CD8-positive, alpha-beta T cell (primary cell): ENCODE measurements at regions of chr5 and their contacts with region 1.

Region 1: DNA sequence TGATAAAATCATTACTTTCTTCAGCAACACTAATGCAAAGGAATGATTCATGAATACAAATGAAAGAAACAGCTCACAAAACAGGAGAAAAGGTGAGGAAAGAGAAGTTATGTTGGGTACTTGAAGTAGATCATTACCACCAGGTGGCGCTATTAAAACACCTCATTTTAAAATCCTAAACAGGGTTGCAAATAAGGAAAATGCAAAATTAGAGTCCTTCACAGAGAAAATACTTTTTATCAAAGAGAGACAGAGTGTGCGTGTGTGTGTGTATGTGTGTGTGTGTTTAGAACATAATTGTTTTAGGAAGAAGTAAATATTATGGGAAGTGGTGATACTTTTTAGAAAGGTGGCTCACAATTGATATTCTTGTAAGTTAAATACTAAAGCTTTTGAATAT is 49.5 kb upstream of the CD180 start:
- DNase-seq: peak in 3 of 9 experiments; percentile 39 to 80 (median 74)
- ATAC-seq: no peak
- H3K4me3 ChIP-seq: no peak overlapping the region
- H3K4me3 Mint-ChIP-seq: no peak overlapping the region
- H3K27ac ChIP-seq: no peak overlapping the region
- H3K27ac Mint-ChIP-seq: no peak overlapping the region
- H3K4me1 ChIP-seq: peaks cover 9% of the 10 kb centered on the region
- H3K4me1 Mint-ChIP-seq: peaks cover 11% of the 10 kb centered on the region
- H3K27me3 ChIP-seq: no peaks in the 10 kb centered on the region
- H3K27me3 Mint-ChIP-seq: no peaks in the 10 kb centered on the region
- CTCF ChIP-seq: peak; percentile 95

Region 2: GRCh38 chr5:67209142-67209771 is 36.9 kb before region 1 on chr5:
- CTCF ChIA-PET with region 1: interaction called, 13 read pairs
- POLR2A ChIA-PET with region 1: no interaction called
- intact Hi-C with region 1: no loop called
- DNase-seq: peak; percentile 12 to 84 (median 61)
- ATAC-seq: peak; percentile 51
- H3K4me3 ChIP-seq: no peak overlapping the region
- H3K4me3 Mint-ChIP-seq: peak overlapping the region; percentile 13
- H3K27ac ChIP-seq: no peak overlapping the region
- H3K27ac Mint-ChIP-seq: peak overlapping the region; percentile 86
- H3K4me1 ChIP-seq: peaks cover 49% of the 10 kb centered on the region
- H3K4me1 Mint-ChIP-seq: peaks cover 58% of the 10 kb centered on the region
- H3K27me3 ChIP-seq: no peaks in the 10 kb centered on the region
- H3K27me3 Mint-ChIP-seq: no peaks in the 10 kb centered on the region
- CTCF ChIP-seq: peak; percentile 81

Region 3: GRCh38 chr5:67221487-67222242 is 24.4 kb before region 1 on chr5:
- CTCF ChIA-PET with region 1: interaction called, 26 read pairs
- POLR2A ChIA-PET with region 1: no interaction called
- intact Hi-C with region 1: no loop called
- DNase-seq: peak in 7 of 9 experiments; percentile 26 to 74 (median 52)
- ATAC-seq: peak; percentile 73
- H3K4me3 ChIP-seq: peak overlapping the region in 1 of 2 experiments; percentile 10
- H3K4me3 Mint-ChIP-seq: peak overlapping the region; percentile 71
- H3K27ac ChIP-seq: peak overlapping the region in 1 of 2 experiments; percentile 39
- H3K27ac Mint-ChIP-seq: peak overlapping the region; percentile 94
- H3K4me1 ChIP-seq: peaks cover 42% of the 10 kb centered on the region
- H3K4me1 Mint-ChIP-seq: peaks cover 61% of the 10 kb centered on the region
- H3K27me3 ChIP-seq: no peaks in the 10 kb centered on the region
- H3K27me3 Mint-ChIP-seq: no peaks in the 10 kb centered on the region
- CTCF ChIP-seq: no peak

Region 4: GRCh38 chr5:68272289-68272688 is 1026.2 kb after region 1 on chr5:
- CTCF ChIA-PET with region 1: interaction called, 38 read pairs
- POLR2A ChIA-PET with region 1: no interaction called
- intact Hi-C with region 1: loop called (anchors 1 kb)
- DNase-seq: peak in 2 of 9 experiments; percentile 38 to 58
- ATAC-seq: no peak
- H3K4me3 ChIP-seq: no peak overlapping the region
- H3K4me3 Mint-ChIP-seq: no peak overlapping the region
- H3K27ac ChIP-seq: no peak overlapping the region
- H3K27ac Mint-ChIP-seq: peak overlapping the region; percentile 52
- H3K4me1 ChIP-seq: peaks cover 64% of the 10 kb centered on the region
- H3K4me1 Mint-ChIP-seq: peaks cover 76% of the 10 kb centered on the region
- H3K27me3 ChIP-seq: no peaks in the 10 kb centered on the region
- H3K27me3 Mint-ChIP-seq: no peaks in the 10 kb centered on the region
- CTCF ChIP-seq: peak; percentile 66

Region 5: GRCh38 chr5:68460147-68460798 is 1214.2 kb after region 1 on chr5:
- CTCF ChIA-PET with region 1: interaction called, 6 read pairs
- POLR2A ChIA-PET with region 1: interaction called, 4 read pairs
- intact Hi-C with region 1: loop called (anchors 1 to 2 kb)
- DNase-seq: peak in 8 of 9 experiments; percentile 13 to 81 (median 42)
- ATAC-seq: peak; percentile 55
- H3K4me3 ChIP-seq: no peak overlapping the region
- H3K4me3 Mint-ChIP-seq: no peak overlapping the region
- H3K27ac ChIP-seq: no peak overlapping the region
- H3K27ac Mint-ChIP-seq: peak overlapping the region; percentile 19
- H3K4me1 ChIP-seq: peaks cover 13% of the 10 kb centered on the region
- H3K4me1 Mint-ChIP-seq: peaks cover 18% of the 10 kb centered on the region
- H3K27me3 ChIP-seq: no peaks in the 10 kb centered on the region
- H3K27me3 Mint-ChIP-seq: no peaks in the 10 kb centered on the region
- CTCF ChIP-seq: peak; percentile 80